ENCODE measurements at regions of chr11 and their contacts with region 1.

Region 1: GRCh38 chr11:95150946-95151684 is 61.5 kb downstream of the ENDOD1 start:
- DNase-seq: peak; percentile 94
- H3K4me3 Mint-ChIP-seq: peak overlapping the region; percentile 83
- H3K27ac Mint-ChIP-seq: peak overlapping the region; percentile 94
- H3K4me1 Mint-ChIP-seq: peaks cover 46% of the 10 kb centered on the region
- H3K27me3 Mint-ChIP-seq: peaks cover 2% of the 10 kb centered on the region

Region 2: GRCh38 chr11:95050595-95051202 is 100.4 kb before region 1 on chr11:
- CTCF ChIA-PET with region 1: no interaction called
- POLR2A ChIA-PET with region 1: no interaction called
- DNase-seq: no peak
- H3K4me3 Mint-ChIP-seq: no peak overlapping the region
- H3K27ac Mint-ChIP-seq: no peak overlapping the region
- H3K4me1 Mint-ChIP-seq: no peaks in the 10 kb centered on the region
- H3K27me3 Mint-ChIP-seq: peaks cover 40% of the 10 kb centered on the region

Region 3: DNA sequence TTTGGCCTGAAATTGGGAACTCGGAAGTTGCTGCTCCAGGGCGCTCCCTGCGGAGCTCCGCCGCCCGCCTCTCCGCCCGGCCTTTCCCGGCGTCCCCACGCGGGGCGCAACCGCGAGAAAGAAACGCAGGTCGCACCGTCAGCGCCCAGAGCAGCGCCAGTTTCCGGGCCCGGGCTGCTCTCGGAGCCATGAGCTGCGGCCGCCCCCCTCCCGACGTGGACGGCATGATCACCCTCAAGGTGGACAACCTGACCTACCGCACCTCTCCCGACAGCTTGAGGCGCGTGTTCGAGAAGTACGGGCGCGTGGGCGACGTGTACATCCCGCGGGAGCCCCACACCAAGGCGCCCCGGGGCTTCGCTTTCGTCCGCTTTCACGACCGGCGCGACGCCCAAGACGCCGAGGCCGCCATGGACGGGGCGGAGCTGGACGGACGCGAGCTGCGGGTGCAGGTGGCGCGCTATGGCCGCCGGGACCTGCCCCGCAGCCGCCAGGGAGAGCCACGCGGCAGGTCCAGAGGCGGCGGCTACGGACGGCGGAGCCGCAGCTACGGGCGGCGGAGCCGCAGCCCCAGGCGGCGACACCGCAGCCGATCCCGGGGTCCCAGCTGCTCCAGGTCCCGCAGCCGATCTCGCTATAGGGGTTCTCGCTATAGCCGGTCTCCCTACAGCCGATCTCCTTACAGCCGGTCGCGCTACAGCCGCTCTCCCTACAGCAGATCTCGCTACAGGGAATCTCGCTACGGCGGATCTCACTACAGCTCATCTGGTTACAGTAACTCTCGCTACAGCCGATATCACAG is 83.9 kb before region 1 on chr11:
- CTCF ChIA-PET with region 1: interaction called, 45 read pairs
- POLR2A ChIA-PET with region 1: interaction called, 3 read pairs
- DNase-seq: peak; percentile 78
- H3K4me3 Mint-ChIP-seq: peak overlapping the region; percentile 88
- H3K27ac Mint-ChIP-seq: peak overlapping the region; percentile 98
- H3K4me1 Mint-ChIP-seq: peaks cover 27% of the 10 kb centered on the region
- H3K27me3 Mint-ChIP-seq: peaks cover 9% of the 10 kb centered on the region

Region 4: DNA sequence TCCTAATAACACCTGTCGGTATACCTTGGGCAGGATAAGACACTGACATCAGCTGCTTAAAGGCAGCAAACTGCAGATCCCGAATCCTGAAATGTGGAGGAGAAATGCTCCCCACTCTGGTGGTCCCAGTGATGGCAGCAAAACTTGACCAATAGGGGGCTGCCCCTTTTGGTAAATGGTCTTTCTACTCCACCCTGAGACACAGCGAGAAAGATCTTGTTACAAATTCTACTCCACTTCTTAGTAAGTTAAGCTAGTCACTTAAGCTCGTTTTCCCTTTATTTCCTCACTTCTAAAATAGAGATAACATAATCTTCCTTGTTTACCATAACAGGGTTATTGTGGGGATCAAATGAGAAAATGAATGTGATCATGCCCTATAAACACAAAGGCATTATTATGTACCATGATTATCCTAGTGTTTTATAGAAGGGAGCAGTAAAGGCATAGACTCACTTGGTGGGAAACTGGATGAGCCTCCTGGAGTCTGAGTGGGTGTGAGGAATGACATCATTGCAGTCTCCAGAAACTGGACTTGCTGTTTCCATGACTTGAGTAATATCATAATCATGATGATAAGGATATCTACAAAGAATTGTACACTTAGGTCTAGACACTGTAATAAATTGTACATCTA is 10.6 kb before region 1 on chr11:
- CTCF ChIA-PET with region 1: interaction called, 10 read pairs
- POLR2A ChIA-PET with region 1: no interaction called
- DNase-seq: no peak
- H3K4me3 Mint-ChIP-seq: no peak overlapping the region
- H3K27ac Mint-ChIP-seq: no peak overlapping the region
- H3K4me1 Mint-ChIP-seq: peaks cover 13% of the 10 kb centered on the region
- H3K27me3 Mint-ChIP-seq: peaks cover 25% of the 10 kb centered on the region

Region 5: DNA sequence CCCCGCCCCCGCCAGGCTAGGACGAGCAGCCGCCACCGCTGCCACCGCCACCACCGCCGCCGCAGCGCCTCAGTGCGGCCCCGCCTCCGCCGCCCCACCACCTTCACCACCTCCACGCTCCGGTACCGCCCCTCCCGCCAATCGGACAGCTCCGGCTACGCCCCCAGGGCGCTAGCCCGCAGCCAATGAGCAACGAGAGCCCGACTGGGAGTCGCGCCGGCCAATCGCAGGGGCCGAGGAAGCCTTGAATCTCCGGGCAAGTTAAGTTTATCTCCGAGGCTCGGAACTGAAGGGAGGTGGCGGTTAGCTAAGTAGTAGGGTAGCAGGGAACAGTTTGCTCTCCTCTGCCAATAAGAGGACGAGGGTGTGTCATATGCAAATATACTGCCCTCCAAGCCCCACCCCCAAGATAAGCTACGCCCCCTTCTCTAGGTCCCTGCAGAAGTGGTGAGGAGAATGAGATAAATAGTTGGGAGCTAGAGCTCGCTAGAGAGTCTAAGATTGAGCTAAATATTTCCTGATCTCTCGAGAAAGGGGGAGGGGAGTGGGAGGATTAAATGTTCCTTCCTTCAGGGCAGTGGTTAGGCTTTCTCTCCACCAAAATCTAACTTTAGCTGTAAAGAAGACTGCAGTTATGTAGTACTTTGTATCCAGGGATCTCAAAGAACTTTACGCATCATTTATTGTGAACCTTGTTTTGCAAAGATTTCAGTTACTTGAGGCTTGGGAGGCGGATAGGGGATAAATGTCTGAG is 80.2 kb after region 1 on chr11 and contains the start of gene SESN3:
- CTCF ChIA-PET with region 1: interaction called, 12 read pairs
- POLR2A ChIA-PET with region 1: no interaction called
- DNase-seq: peak; percentile 99
- H3K4me3 Mint-ChIP-seq: no peak within 1 kb of the TSS
- H3K27ac Mint-ChIP-seq: peak within 1 kb of the TSS; percentile 92
- H3K4me1 Mint-ChIP-seq: peaks cover 46% of the 10 kb centered on the region
- H3K27me3 Mint-ChIP-seq: no peaks in the 10 kb centered on the region
- total RNA-seq, gene SESN3: 47.6 to 50.6 TPM

Region 6: DNA sequence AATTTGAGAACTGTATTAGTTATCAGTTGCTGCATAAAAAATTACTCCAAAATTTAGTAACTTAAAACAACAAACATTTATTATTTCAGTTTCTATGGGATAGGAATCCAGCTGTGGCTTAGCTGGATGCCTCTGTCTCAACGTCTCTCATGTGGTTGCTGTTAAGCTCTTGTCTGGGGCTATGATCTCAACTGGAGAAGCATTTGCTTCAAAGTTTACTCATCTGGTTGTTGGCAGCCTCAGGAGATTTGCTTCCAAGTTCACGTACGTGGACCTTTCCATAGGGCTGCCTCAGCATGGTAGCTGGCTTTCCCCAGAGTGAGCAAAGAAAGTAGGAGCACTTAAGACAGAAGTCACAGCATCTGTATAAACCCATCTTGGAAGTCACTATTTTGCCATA is 224.8 kb after region 1 on chr11:
- CTCF ChIA-PET with region 1: no interaction called
- POLR2A ChIA-PET with region 1: no interaction called
- DNase-seq: no peak
- H3K4me3 Mint-ChIP-seq: no peak overlapping the region
- H3K27ac Mint-ChIP-seq: no peak overlapping the region
- H3K4me1 Mint-ChIP-seq: no peaks in the 10 kb centered on the region
- H3K27me3 Mint-ChIP-seq: peaks cover 3% of the 10 kb centered on the region

Region 7: GRCh38 chr11:95697614-95698408 is 546.7 kb after region 1 on chr11:
- CTCF ChIA-PET with region 1: interaction called, 90 read pairs
- POLR2A ChIA-PET with region 1: no interaction called
- DNase-seq: no peak
- H3K4me3 Mint-ChIP-seq: no peak overlapping the region
- H3K27ac Mint-ChIP-seq: peak overlapping the region; percentile 93
- H3K4me1 Mint-ChIP-seq: peaks cover 71% of the 10 kb centered on the region
- H3K27me3 Mint-ChIP-seq: no peaks in the 10 kb centered on the region

Region 8: GRCh38 chr11:95705485-95706124 is 554.5 kb after region 1 on chr11:
- CTCF ChIA-PET with region 1: interaction called, 90 read pairs
- POLR2A ChIA-PET with region 1: interaction called, 3 read pairs
- DNase-seq: peak; percentile 91
- H3K4me3 Mint-ChIP-seq: no peak overlapping the region
- H3K27ac Mint-ChIP-seq: no peak overlapping the region
- H3K4me1 Mint-ChIP-seq: peaks cover 9% of the 10 kb centered on the region
- H3K27me3 Mint-ChIP-seq: no peaks in the 10 kb centered on the region

Region 9: GRCh38 chr11:95762534-95762933 is 611.4 kb after region 1 on chr11:
- CTCF ChIA-PET with region 1: interaction called, 16 read pairs
- POLR2A ChIA-PET with region 1: no interaction called
- DNase-seq: no peak
- H3K4me3 Mint-ChIP-seq: no peak overlapping the region
- H3K27ac Mint-ChIP-seq: no peak overlapping the region
- H3K4me1 Mint-ChIP-seq: peaks cover 10% of the 10 kb centered on the region
- H3K27me3 Mint-ChIP-seq: no peaks in the 10 kb centered on the region

Measured in activated CD4-positive, alpha-beta T cell treated with anti-CD3 and anti-CD28 coated beads, Interleukin-2, amount 10 ng/mL, durations not matched to agents 7 days and 5 days (primary cell).